Natural killer cell (primary cell): ENCODE measurements at regions of chr3 and their contacts with region 1.

Region 1: DNA sequence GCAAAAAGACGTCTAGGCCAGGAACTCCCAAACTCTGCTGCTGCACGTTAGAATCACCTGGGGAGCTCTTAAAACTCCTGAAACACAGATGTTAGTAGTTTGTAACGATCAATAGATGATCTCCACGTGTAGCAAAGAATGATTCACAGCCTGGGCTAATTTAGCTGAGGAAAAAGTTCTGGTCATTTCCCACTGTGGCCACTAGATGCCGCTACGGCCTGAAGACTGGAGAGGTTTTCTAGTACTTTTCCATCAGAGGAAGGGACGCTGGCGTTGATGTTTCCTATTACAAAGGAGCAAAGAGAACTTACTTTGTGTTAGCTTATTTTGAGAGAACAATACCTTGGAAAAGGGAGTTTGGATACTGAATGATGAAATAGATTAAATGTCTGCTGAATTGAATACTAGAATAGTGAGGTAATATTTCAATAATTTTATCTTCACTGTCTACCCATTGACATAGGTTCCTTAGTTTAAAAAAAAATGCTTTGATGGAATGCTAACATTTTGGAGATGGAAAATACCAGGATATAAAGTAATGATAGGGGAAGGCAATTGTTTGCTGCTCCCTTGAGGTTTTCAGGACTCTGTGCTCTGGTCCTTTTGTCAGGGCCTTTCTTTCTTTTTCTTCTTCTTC is 159.1 kb downstream of the P3H2 start:
- DNase-seq: peak; percentile 21 to 72
- ATAC-seq: peak in 2 of 3 donors; percentile 70 to 73
- H3K4me3 ChIP-seq: no peak overlapping the region
- H3K4me3 Mint-ChIP-seq: no peak overlapping the region
- H3K27ac ChIP-seq: no peak overlapping the region
- H3K27ac Mint-ChIP-seq: no peak overlapping the region
- H3K4me1 ChIP-seq: no peaks in the 10 kb centered on the region
- H3K4me1 Mint-ChIP-seq: no peaks in the 10 kb centered on the region
- H3K27me3 ChIP-seq: no peaks in the 10 kb centered on the region
- H3K27me3 Mint-ChIP-seq: peaks cover 0 to 3% of the 10 kb centered on the region in 2 donors
- CTCF ChIP-seq: peak; percentile 82

Region 2: GRCh38 chr3:190696777-190697501 is 735.3 kb after region 1 on chr3:
- intact Hi-C with region 1: loop called (anchors 10 kb)
- DNase-seq: peak in 1 of 2 donors; percentile 13
- ATAC-seq: no peak
- H3K4me3 ChIP-seq: no peak overlapping the region
- H3K4me3 Mint-ChIP-seq: no peak overlapping the region
- H3K27ac ChIP-seq: no peak overlapping the region
- H3K27ac Mint-ChIP-seq: no peak overlapping the region
- H3K4me1 ChIP-seq: no peaks in the 10 kb centered on the region
- H3K4me1 Mint-ChIP-seq: no peaks in the 10 kb centered on the region
- H3K27me3 ChIP-seq: no peaks in the 10 kb centered on the region
- H3K27me3 Mint-ChIP-seq: no peaks in the 10 kb centered on the region
- CTCF ChIP-seq: peak; percentile 20